Activated CD4-positive, alpha-beta memory T cell treated with anti-CD3 and anti-CD28 coated beads for 36 hours (primary cell): ENCODE measurements at regions of chr6 and their contacts with region 1.

Region 1: DNA sequence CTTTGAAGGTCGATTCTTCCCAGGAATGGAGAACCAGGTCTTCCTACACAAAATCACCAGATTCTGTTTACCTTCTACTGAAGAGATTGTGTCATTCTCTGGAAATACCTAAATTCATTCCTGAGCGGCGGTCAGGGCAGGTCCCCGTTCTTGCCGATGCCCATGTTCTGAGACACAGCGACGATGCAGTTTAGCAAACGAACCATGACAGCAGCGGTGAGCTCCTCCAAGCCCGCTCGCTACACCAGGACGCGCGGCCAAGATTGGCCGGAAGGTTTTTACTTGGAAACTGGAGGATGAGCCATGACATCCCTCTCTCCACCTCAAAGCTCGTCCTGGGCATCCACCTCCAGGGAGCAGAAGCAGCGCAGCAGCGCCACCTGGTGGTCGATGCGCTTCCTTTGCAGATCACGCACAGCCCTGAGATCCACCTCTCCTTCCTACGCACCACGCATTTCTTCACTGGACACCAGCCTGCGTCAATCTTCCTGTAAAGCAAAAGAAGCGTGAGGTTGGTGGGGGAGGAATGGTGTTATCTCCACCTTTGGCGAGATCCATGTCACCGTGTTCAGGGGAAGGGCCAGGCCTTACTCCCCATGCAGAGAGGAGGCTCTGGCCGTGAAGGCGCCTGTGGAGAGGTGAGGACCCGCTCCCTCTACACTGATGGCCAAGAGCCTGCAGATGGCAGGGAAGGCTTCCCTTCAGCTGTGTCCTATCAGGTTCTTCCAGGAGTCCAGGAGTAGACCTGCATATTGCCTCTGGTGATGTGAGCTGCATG is 9.9 kb upstream of the HLA-B start:
- DNase-seq: peak; percentile 89
- H3K4me3 Mint-ChIP-seq: peak overlapping the region; percentile 75
- H3K27ac Mint-ChIP-seq: peak overlapping the region; percentile 25
- H3K4me1 Mint-ChIP-seq: peaks cover 23% of the 10 kb centered on the region
- H3K27me3 Mint-ChIP-seq: peaks cover 10% of the 10 kb centered on the region

Region 2: GRCh38 chr6:31158140-31158862 is 208.6 kb before region 1 on chr6 and contains the start of gene TCF19:
- CTCF ChIA-PET with region 1: interaction called, 10 read pairs
- POLR2A ChIA-PET with region 1: no interaction called
- intact Hi-C with region 1: no loop called
- DNase-seq: peak; percentile 100
- H3K4me3 Mint-ChIP-seq: peak within 1 kb of the TSS; percentile 92
- H3K27ac Mint-ChIP-seq: peak within 1 kb of the TSS; percentile 73
- H3K4me1 Mint-ChIP-seq: peaks cover 29% of the 10 kb centered on the region
- H3K27me3 Mint-ChIP-seq: peaks cover 2% of the 10 kb centered on the region
- total RNA-seq, gene TCF19: 93.0 to 93.1 TPM

Region 3: DNA sequence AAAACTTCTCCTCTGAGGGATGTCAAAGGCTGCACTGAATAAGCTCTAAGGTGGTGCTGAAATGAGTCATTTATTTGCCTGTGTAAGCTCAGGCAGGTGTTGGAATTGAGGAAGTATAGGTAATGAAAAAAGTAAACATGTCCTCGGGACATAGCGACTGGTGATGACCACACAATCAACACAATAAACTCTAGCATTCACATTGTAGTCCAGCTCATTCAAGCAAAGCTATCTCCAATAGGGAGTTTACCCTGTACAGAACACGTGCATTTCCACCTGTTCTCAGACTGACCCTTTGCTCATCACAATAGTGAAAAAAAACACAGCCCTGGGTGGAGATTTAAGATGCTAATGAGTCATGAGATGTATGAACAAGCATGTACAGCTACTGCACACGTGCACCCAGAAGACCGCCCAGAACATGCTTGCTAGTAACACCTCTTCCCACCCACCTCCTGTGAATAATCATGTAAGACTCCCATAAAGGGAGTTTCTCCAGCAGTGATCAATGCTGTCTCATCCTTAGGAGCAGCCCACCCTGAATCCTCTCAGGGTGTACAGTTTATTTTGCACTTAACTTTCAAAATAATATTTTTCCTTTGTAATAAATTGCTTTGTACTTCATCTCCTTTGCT is 163.4 kb before region 1 on chr6:
- CTCF ChIA-PET with region 1: interaction called, 161 read pairs
- POLR2A ChIA-PET with region 1: interaction called, 31 read pairs
- intact Hi-C with region 1: no loop called
- DNase-seq: peak; percentile 76
- H3K4me3 Mint-ChIP-seq: peak overlapping the region; percentile 78
- H3K27ac Mint-ChIP-seq: peak overlapping the region; percentile 94
- H3K4me1 Mint-ChIP-seq: peaks cover 57% of the 10 kb centered on the region
- H3K27me3 Mint-ChIP-seq: no peaks in the 10 kb centered on the region

Region 4: GRCh38 chr6:31351401-31352309 is 15.2 kb before region 1 on chr6:
- CTCF ChIA-PET with region 1: interaction called, 10 read pairs
- POLR2A ChIA-PET with region 1: no interaction called
- intact Hi-C with region 1: no loop called
- DNase-seq: peak; percentile 22
- H3K4me3 Mint-ChIP-seq: peak overlapping the region; percentile 5
- H3K27ac Mint-ChIP-seq: peak overlapping the region; percentile 19
- H3K4me1 Mint-ChIP-seq: peaks cover 54% of the 10 kb centered on the region
- H3K27me3 Mint-ChIP-seq: no peaks in the 10 kb centered on the region

Region 5: GRCh38 chr6:31418251-31418650 is 51.4 kb after region 1 on chr6:
- CTCF ChIA-PET with region 1: no interaction called
- POLR2A ChIA-PET with region 1: no interaction called
- intact Hi-C with region 1: no loop called
- DNase-seq: no peak
- H3K4me3 Mint-ChIP-seq: no peak overlapping the region
- H3K27ac Mint-ChIP-seq: no peak overlapping the region
- H3K4me1 Mint-ChIP-seq: no peaks in the 10 kb centered on the region
- H3K27me3 Mint-ChIP-seq: no peaks in the 10 kb centered on the region